HEK293 (cell line): ENCODE measurements at regions of chr11 and their contacts with region 1.

Region 1: GRCh38 chr11:36376888-36377758 is 81.0 kb downstream of the PRR5L start:
- H3K4me3 ChIP-seq: peak overlapping the region; percentile 58
- H3K27ac ChIP-seq: no peak overlapping the region; the same call in 1 of the 2 replicates
- H3K4me1 ChIP-seq: no peaks in the 10 kb centered on the region
- CTCF ChIP-seq: peak; percentile 78

Region 2: DNA sequence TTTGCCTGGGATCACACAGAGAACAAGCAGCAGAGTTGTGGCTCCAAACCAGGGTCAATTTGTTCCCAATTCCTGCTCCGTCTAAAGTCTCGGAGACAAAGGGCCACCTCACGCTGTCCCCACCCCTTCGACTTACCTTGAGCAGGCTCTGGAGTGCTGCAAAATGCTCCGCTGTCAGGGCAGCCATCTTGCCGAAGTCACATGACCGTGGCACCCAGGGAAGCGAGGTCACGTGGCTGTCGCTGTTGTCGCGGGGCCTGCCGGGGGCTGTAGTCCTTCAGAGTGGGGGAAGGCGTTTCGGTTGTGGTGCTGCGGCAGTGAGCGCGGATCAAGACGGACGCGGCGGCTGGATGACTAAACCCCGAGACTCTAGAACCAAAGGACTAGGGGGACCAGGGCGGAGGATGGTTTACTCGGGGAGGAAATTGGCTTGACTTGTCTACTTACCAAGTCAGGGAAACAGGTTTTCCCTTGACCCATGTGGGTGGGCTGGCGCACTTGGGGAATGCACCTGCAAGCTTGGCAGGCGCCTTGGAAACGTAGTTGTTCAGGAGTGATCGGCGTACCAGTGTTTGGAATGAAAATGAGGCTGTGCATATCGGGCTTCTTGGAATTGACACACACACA is 87.8 kb before region 1 on chr11 and contains the start of gene COMMD9:
- CTCF ChIA-PET with region 1: interaction called, 48 read pairs
- POLR2A ChIA-PET with region 1: no interaction called
- H3K4me3 ChIP-seq: peak within 1 kb of the TSS; percentile 87
- H3K27ac ChIP-seq: no peak within 1 kb of the TSS
- H3K4me1 ChIP-seq: no peaks in the 10 kb centered on the region
- CTCF ChIP-seq: no peak

Region 3: GRCh38 chr11:36326524-36327419 is 50.4 kb before region 1 on chr11:
- CTCF ChIA-PET with region 1: no interaction called
- POLR2A ChIA-PET with region 1: no interaction called
- H3K4me3 ChIP-seq: no peak overlapping the region
- H3K27ac ChIP-seq: no peak overlapping the region
- H3K4me1 ChIP-seq: no peaks in the 10 kb centered on the region
- CTCF ChIP-seq: no peak

Region 4: DNA sequence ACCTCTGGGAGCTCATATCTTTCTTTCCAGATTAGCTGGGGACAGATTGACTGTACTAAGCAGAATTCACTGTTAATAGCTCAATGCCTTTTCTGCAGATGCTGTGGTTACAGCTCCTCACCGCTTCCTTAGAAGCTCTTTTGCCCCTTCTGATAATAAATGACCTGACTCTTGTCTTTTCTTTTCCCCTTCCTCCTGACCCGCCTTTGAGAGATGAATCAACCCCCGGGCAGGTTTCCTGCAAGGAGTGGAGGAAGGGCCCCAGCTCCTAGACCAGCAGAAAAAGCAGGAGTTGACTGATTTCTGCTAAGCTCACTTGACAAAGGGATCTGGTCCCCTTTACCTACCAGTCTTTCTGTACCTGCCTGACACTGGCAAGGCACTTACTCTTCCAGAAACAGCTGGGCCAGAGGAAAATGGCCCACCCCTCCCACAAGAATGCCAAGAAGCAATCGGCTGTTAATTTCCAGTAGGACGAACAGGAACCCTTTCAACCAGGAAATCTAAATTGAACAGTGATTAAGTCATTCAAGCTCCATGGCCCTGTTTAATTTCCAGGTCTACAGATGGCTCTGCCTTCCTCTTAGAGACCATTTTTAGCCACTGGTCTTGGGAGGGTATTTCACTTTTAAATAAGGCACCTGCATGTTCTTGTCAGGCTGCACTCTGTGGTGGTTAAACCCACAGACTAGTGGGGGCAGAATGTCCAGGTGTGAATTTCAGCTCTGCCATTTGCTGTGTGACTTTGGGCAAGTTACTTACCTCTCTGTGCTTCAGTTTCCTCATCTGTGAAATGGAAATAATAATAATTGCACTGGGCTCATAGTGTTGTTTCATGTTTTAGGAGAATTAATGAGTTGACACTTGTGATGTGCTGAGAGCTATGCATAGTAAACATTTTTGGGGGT is 13.5 kb before region 1 on chr11:
- CTCF ChIA-PET with region 1: interaction called, 18 read pairs
- POLR2A ChIA-PET with region 1: interaction called, 15 read pairs
- H3K4me3 ChIP-seq: no peak overlapping the region
- H3K27ac ChIP-seq: no peak overlapping the region
- H3K4me1 ChIP-seq: no peaks in the 10 kb centered on the region
- CTCF ChIP-seq: no peak